Heart right ventricle (tissue), 16 donors: ENCODE measurements at regions of chr11 and their contacts with region 1.

Region 1: DNA sequence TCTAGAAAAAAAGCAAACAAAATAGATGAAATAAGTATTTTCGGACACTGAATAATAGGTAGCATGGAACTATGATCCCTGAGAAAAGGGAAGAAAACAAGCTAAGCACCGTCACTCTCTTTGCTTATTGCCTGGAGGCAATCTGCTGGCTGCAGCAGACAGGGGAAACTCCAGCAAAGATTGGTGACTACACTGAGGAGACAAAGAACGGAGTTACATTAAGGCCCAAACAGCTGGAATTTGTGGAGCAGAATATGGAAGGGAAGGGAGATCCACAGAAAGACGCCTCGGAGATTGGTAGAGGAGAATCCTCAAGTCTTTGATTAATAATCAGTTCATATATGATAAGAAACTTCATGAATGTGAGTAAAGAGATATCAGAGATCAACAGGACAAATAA is 150.2 kb downstream of the TYR start:
- DNase-seq: no peak
- ATAC-seq: no peak
- H3K4me3 ChIP-seq: no peak overlapping the region
- H3K27ac ChIP-seq: no peak overlapping the region
- H3K4me1 ChIP-seq: no peaks in the 10 kb centered on the region
- H3K27me3 ChIP-seq: no peaks in the 10 kb centered on the region
- CTCF ChIP-seq: no peak

Region 2: DNA sequence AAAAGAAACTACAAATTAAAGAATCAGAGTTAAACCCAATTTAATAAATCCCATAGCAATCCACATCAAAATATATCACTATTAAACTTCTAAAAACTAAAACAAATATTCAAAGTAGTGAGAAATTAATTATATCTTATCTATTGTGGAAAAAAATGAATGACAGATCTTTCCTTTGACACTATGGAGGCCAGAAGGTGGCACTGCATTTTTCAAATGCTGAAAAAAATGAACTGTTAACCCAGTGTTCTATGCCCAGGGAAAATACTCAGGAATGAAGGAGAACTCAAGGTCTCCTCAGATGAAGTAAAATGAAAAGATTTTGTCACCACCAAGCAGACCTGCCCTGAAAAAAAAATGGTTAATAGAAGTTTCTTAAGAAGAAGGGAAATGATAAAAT is 122.5 kb before region 1 on chr11:
- intact Hi-C with region 1: no loop called
- DNase-seq: no peak
- ATAC-seq: no peak
- H3K4me3 ChIP-seq: no peak overlapping the region
- H3K27ac ChIP-seq: no peak overlapping the region
- H3K4me1 ChIP-seq: no peaks in the 10 kb centered on the region
- H3K27me3 ChIP-seq: no peaks in the 10 kb centered on the region
- CTCF ChIP-seq: no peak

Region 3: DNA sequence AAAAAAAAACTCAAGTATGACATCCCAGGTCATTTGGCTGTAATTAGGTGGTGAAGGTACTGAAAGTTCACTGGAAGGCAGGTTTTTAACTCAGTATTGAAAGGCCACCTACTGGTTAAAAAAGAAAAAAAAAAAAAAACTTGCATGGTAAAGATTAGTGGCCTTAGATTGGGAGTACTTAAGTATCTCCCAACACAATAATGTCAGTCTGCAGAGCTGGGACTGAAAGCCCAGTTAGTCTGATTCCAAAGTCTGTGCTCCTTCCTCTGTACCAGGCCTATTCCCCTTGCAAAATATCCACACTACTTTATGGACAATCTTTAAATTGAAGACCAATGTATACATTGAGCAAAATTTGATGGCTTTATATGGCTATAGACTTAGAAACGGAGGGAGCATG is 77.7 kb after region 1 on chr11:
- intact Hi-C with region 1: loop called in 1 of 10 experiments (anchors 10 kb)
- DNase-seq: no peak
- ATAC-seq: no peak
- H3K4me3 ChIP-seq: no peak overlapping the region
- H3K27ac ChIP-seq: no peak overlapping the region
- H3K4me1 ChIP-seq: no peaks in the 10 kb centered on the region
- H3K27me3 ChIP-seq: no peaks in the 10 kb centered on the region
- CTCF ChIP-seq: no peak

Region 4: GRCh38 chr11:89613911-89614310 is 286.0 kb after region 1 on chr11:
- intact Hi-C with region 1: loop called in 5 of 10 experiments (anchors 5 to 10 kb)
- DNase-seq: no peak
- ATAC-seq: peak in 1 of 8 donors; percentile 19
- H3K4me3 ChIP-seq: no peak overlapping the region
- H3K27ac ChIP-seq: no peak overlapping the region
- H3K4me1 ChIP-seq: peaks cover 0 to 8% (median 0%) of the 10 kb centered on the region in 9 donors
- H3K27me3 ChIP-seq: no peaks in the 10 kb centered on the region
- CTCF ChIP-seq: no peak